Left cardiac atrium (tissue), 4 donors: ENCODE measurements at regions of chr10 and their contacts with region 1.

Region 1: DNA sequence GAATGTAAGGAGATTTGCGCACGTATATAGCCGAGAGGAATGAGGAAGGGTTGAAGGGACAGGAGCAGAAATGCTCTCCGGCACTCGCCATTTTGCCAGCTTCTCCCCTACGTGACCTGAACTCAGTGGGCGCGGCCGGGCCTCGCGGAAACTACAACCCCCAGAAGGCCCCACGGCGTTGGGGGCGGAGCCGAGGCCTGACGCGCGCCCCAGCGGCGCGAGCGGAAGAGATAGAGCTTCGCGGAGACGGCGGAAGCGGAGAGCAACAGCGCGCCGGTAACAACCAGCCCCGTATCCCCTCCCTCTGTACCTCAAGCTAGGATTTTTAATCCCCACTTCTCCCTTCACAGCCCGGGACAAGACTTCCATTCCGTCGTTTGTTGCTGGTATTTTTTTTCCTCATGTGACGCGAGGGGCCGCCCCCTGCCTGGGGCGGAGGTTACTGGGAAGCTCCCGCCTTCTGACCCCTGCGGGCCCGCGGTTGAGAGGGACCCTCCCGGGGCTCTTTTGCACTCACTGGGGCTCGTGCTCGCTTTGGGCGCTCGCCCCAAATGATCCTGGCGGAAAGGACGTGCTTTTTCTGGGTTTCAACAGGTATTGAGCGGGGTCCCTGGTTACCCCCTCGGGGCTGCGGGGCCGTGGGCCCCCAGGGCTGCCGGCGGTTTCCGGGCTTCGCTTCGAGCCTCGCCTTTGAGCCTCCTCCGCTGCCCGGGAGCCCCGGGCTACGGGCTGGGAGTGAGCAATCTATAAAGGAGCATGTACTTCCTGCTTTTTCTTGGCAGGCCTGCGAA is at the start of gene R3HCC1L:
- DNase-seq: peak; percentile 93
- ATAC-seq: peak; percentile 100
- total RNA-seq, gene R3HCC1L: 6.4 to 6.6 TPM

Region 2: GRCh38 chr10:97686962-97687784 is 447.5 kb before region 1 on chr10 and contains the start of gene AVPI1:
- intact Hi-C with region 1: loop called in 1 of 2 experiments (anchors 5 kb)
- DNase-seq: peak; percentile 98
- ATAC-seq: peak; percentile 95
- total RNA-seq, gene AVPI1: 13.2 to 16.3 TPM

Region 3: DNA sequence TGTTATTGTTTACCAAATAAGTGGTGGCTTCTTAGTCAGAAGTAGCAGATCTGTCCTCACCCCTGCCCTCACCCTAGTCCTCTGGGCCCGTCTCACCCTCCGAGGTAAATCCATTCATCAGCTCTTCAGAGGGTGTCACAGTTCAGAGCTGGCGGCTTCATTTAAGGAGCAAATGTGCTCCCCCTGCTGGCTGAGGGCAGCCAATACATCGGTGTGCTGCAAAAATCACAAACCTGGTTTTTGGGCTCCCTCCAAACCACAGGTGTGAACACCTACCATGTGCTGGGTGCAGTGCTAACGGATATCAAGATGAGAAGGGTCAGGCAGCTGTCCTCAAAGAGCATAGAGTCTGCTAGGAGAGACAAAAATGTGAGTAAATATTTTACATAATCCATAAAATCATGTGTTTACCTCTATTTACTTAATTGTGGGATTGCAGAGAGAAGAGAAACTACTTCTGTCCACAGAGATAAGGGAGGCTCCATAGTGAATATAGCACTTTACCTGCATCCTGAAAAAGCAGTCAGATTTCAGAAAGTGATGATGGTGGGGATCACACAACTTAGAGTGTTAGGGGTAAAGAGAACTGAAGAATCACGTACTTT is 88.7 kb before region 1 on chr10:
- intact Hi-C with region 1: loop called in 1 of 2 experiments (anchors 10 kb)
- DNase-seq: peak; percentile 55
- ATAC-seq: peak; percentile 25 to 65

Region 4: GRCh38 chr10:98361131-98362025 is 226.8 kb after region 1 on chr10:
- intact Hi-C with region 1: no loop called
- DNase-seq: peak; percentile 91
- ATAC-seq: peak; percentile 98 to 99